AG04450 (cell line): ENCODE measurements at regions of chr20 and their contacts with region 1.

Region 1: GRCh38 chr20:11204926-11205768 is 531.3 kb upstream of the JAG1 start:
- DNase-seq: no peak
- H3K4me3 ChIP-seq: no peak overlapping the region
- H3K27ac ChIP-seq: no peak overlapping the region
- H3K27me3 ChIP-seq: no peaks in the 10 kb centered on the region
- CTCF ChIP-seq: peak; percentile 83

Region 2: DNA sequence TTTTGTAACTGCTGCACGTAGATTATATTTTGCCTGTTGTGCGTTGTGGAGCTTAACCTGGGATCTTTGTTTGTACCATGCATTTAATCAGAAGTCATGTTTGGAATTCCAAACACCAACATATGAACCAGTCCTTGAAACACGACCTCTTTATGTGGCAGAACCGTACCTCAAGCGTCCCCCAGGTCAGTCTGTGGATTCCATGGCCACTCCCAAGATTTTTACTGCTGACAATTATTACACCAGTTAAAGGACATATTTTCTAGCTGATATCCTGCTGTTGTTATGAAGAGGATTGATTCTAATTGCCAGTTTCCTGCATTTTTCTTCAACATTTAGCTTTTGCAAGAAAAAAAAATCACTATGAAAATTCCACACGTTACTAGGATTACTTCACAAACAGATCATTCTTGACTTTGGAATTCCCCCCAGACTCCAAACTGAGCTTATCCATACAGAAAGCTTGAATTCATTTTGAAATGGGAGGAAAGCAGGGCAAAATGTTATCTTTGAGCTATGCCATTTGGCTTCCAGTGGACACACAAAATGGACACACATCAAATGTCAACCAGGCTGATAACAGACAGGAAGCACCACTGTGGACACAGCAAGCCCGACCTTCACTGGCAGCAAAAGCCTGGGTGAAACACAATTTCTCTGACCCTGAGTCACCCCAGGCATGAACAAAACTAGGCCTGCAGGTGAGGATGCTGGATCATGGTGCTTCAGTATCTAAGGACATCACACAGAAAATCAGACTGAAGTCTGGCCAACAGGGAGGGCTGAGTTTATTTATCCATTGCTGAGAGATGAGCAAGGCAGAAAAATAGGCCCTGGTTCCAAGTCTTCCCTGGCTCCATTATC is 11.5 kb after region 1 on chr20:
- CTCF ChIA-PET with region 1: interaction called, 16 read pairs
- POLR2A ChIA-PET with region 1: no interaction called
- DNase-seq: no peak
- H3K4me3 ChIP-seq: no peak overlapping the region
- H3K27ac ChIP-seq: peak overlapping the region; percentile 81
- H3K27me3 ChIP-seq: no peaks in the 10 kb centered on the region
- CTCF ChIP-seq: no peak